ENCODE measurements at regions of chr15 and their contacts with region 1.

Region 1: GRCh38 chr15:45457641-45458433 is 64.7 kb downstream of the SLC30A4 start:
- DNase-seq: peak; percentile 79
- ATAC-seq: peak; percentile 63
- H3K4me3 ChIP-seq: peak overlapping the region; percentile 42 to 48
- H3K27ac ChIP-seq: no peak overlapping the region
- H3K4me1 ChIP-seq: peaks cover 28 to 50% of the 10 kb centered on the region in 2 experiments
- H3K27me3 ChIP-seq: no peaks in the 10 kb centered on the region
- CTCF ChIP-seq: peak; percentile 61 to 97 (median 64)
- POLR2A ChIP-seq: no peak
- RAD21 ChIP-seq: peak; percentile 93

Region 2: GRCh38 chr15:45118131-45118588 is 339.7 kb before region 1 on chr15:
- CTCF ChIA-PET with region 1: interaction called, 13 read pairs
- POLR2A ChIA-PET with region 1: no interaction called
- RAD21 ChIA-PET with region 1: no interaction called
- intact Hi-C with region 1: no loop called
- DNase-seq: peak; percentile 75
- ATAC-seq: peak; percentile 99
- H3K4me3 ChIP-seq: no peak overlapping the region
- H3K27ac ChIP-seq: no peak overlapping the region
- H3K4me1 ChIP-seq: peaks cover 2 to 16% of the 10 kb centered on the region in 2 experiments; a peak in 3 of 4 replicates
- H3K27me3 ChIP-seq: no peaks in the 10 kb centered on the region
- CTCF ChIP-seq: peak; percentile 99 to 100 (median 99)
- POLR2A ChIP-seq: no peak
- RAD21 ChIP-seq: peak; percentile 79

Region 3: DNA sequence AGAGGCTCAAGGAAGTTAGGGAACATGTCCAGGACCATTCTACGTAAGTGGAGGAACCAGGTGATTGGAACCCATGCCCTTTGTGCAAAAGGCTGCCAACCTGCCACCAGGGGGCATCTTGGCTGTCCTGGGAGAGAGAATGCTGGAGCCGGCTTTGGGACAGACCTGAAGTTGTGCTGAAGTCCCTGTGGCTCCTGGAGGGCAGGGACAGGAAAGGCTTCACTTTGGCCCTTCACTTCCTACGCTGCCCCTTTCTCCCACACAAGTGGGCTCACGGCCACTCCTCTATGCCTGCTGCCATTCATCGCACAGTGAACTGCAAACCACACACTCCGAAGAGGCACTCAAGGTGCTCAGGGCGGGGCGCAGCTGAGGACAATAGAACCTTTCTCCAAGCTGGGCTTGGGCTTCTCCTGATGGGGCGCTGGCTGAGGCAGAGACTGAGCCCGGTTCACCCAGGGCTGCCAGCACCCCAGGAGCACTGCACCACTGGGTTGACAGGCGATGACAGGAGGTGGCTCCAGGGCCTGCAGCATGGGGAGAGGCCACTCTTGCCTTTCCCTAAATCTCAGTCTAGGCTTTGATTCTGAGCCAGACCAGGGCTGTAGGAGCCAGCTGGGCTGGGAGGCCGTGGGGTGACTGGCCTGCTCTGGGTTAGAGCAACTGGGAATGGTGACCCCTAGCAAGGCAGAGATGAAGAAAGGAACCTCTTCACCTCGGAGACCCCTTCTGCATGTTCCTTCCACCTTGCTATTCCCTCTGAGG is 278.4 kb before region 1 on chr15:
- CTCF ChIA-PET with region 1: interaction called, 13 read pairs
- POLR2A ChIA-PET with region 1: no interaction called
- RAD21 ChIA-PET with region 1: no interaction called
- intact Hi-C with region 1: no loop called
- DNase-seq: peak; percentile 60
- ATAC-seq: peak; percentile 84
- H3K4me3 ChIP-seq: no peak overlapping the region
- H3K27ac ChIP-seq: no peak overlapping the region; the same call in 1 of the 2 replicates
- H3K4me1 ChIP-seq: peaks cover 12 to 41% of the 10 kb centered on the region in 2 experiments
- H3K27me3 ChIP-seq: no peaks in the 10 kb centered on the region
- CTCF ChIP-seq: peak; percentile 67 to 91 (median 83)
- POLR2A ChIP-seq: no peak
- RAD21 ChIP-seq: peak; percentile 56

Region 4: DNA sequence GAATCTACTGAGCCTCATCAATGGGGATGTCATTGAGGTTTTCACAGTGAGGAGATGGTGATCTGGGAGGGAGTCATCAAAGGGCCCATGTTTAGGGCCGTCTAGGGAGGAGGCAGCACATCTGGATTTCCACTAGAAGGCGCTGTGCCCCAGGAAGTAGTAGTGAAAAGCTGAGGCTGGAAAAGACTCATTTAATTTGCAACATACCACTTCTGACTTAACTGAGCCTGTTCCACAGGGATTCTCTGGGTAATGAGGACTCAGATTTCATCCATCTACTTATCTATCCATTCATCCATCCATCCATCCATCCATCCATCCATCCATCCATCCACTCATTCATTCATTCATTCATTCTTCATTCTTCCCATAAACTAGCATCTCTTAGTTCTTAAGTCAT is 252.6 kb before region 1 on chr15:
- CTCF ChIA-PET with region 1: interaction called, 16 read pairs
- POLR2A ChIA-PET with region 1: no interaction called
- RAD21 ChIA-PET with region 1: no interaction called
- intact Hi-C with region 1: loop called (anchors 2 kb)
- DNase-seq: peak; percentile 58
- ATAC-seq: peak; percentile 49
- H3K4me3 ChIP-seq: no peak overlapping the region
- H3K27ac ChIP-seq: no peak overlapping the region
- H3K4me1 ChIP-seq: peaks cover 0 to 14% of the 10 kb centered on the region in 2 experiments; a peak in 2 of 4 replicates
- H3K27me3 ChIP-seq: no peaks in the 10 kb centered on the region
- CTCF ChIP-seq: peak in 2 of 3 experiments; percentile 96 to 97; a peak in 4 of 6 replicates
- POLR2A ChIP-seq: no peak
- RAD21 ChIP-seq: no peak

Region 5: DNA sequence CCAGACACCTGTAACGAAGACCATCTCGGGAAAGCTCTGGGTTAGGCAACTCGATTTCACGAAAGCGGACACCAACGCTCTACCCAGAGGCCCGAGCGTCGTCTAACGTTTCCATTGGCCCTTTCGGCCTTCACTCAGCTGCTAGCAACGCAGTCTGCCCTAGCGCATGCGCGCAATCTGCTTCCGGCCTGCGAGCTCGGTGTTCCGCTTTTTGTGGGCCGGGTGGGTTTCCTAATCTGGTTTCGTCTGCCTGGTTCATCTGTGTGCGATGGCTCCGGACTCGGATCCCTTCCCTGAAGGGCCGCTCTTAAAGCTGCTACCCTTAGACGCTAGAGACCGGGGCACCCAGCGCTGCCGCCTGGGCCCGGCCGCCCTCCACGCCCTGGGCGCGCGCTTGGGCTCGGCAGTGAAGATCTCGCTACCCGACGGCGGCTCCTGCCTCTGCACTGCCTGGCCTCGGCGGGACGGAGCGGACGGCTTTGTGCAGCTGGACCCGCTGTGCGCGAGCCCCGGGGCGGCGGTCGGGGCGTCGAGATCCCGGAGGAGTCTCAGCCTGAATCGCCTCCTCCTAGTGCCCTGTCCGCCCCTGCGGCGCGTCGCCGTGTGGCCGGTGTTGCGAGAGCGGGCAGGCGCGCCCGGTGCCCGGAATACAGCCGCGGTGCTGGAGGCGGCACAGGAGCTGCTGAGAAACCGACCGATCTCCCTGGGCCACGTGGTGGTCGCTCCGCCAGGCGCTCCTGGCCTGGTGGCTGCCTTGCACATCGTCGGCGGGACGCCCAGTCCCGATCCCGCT is 55.5 kb before region 1 on chr15:
- CTCF ChIA-PET with region 1: interaction called, 6 read pairs
- POLR2A ChIA-PET with region 1: no interaction called
- RAD21 ChIA-PET with region 1: no interaction called
- intact Hi-C with region 1: loop called (anchors 2 kb)
- DNase-seq: peak; percentile 99
- ATAC-seq: peak; percentile 92
- H3K4me3 ChIP-seq: peak overlapping the region; percentile 78 to 86
- H3K27ac ChIP-seq: peak overlapping the region; percentile 97
- H3K4me1 ChIP-seq: peaks cover 5 to 15% of the 10 kb centered on the region in 2 experiments; a peak in 3 of 4 replicates
- H3K27me3 ChIP-seq: no peaks in the 10 kb centered on the region
- CTCF ChIP-seq: no peak
- POLR2A ChIP-seq: peak; percentile 97
- RAD21 ChIP-seq: no peak

Region 6: DNA sequence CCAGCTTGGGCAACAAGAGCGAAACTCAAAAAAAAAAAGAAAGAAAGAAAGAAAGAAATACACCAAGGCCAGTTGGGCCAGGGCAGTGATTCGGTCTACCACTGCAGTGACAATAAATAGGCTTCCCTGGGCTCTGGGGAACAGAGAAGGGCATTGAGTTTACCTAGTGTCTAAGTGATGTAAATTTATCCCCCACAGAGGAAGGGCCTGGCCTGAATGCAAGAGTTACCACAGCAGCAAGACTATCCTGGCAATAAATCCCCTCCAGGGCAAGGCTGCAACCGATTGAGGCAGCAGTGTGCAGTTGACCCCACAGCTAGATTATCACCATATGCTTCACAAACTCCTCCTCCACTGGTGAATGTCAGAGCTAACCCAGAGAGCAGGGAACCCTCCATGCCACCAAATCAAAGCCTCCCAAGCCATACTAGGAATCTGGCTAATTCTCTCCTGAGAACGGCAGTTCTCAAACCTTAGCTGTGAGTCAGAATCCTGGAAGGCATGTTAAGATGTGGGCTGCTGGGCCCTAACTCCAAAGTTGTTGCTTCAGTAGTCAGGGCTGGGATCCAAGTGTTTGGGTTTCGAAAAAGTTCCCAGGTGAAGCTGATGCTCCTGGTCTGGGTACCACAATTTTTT is 15.2 kb before region 1 on chr15:
- CTCF ChIA-PET with region 1: interaction called, 13 read pairs
- POLR2A ChIA-PET with region 1: no interaction called
- RAD21 ChIA-PET with region 1: no interaction called
- intact Hi-C with region 1: no loop called
- DNase-seq: no peak
- ATAC-seq: no peak
- H3K4me3 ChIP-seq: no peak overlapping the region
- H3K27ac ChIP-seq: no peak overlapping the region
- H3K4me1 ChIP-seq: peaks cover 0 to 6% of the 10 kb centered on the region in 2 experiments; a peak in 1 of 4 replicates
- H3K27me3 ChIP-seq: no peaks in the 10 kb centered on the region
- CTCF ChIP-seq: no peak
- POLR2A ChIP-seq: no peak
- RAD21 ChIP-seq: no peak

Region 7: GRCh38 chr15:45476410-45476809 is 18.6 kb after region 1 on chr15:
- CTCF ChIA-PET with region 1: no interaction called
- POLR2A ChIA-PET with region 1: no interaction called
- RAD21 ChIA-PET with region 1: no interaction called
- intact Hi-C with region 1: no loop called
- DNase-seq: no peak
- ATAC-seq: no peak
- H3K4me3 ChIP-seq: no peak overlapping the region
- H3K27ac ChIP-seq: no peak overlapping the region
- H3K4me1 ChIP-seq: no peaks in the 10 kb centered on the region
- H3K27me3 ChIP-seq: no peaks in the 10 kb centered on the region
- CTCF ChIP-seq: no peak
- POLR2A ChIP-seq: no peak
- RAD21 ChIP-seq: no peak

Region 8: DNA sequence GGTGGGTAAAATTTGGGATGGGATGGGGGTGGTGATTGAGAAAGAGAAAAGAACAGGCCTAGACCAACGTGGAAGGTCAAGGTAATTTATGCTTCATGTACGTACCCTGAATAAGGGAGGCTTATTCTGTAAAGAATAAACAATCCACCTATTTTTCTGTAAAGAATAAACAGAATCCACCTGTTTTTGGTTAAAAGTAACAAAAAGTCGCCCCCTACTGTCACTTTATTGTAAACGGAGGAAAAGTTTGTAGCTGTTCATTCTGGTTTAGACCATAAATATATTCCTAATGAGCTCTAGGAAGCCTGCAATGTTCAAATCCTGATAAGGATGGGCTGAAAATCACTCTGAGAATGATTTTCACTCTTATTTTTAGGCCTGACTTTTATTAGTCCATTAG is 153.5 kb after region 1 on chr15:
- CTCF ChIA-PET with region 1: interaction called, 82 read pairs
- POLR2A ChIA-PET with region 1: interaction called, 3 read pairs
- RAD21 ChIA-PET with region 1: interaction called in 1 of 2 experiments, 7 read pairs
- intact Hi-C with region 1: loop called (anchors 1 kb)
- DNase-seq: no peak
- ATAC-seq: no peak
- H3K4me3 ChIP-seq: no peak overlapping the region
- H3K27ac ChIP-seq: no peak overlapping the region
- H3K4me1 ChIP-seq: peaks cover 0 to 5% of the 10 kb centered on the region in 2 experiments; a peak in 1 of 4 replicates
- H3K27me3 ChIP-seq: no peaks in the 10 kb centered on the region
- CTCF ChIP-seq: peak; percentile 37 to 67 (median 60); a peak in 4 of 6 replicates
- POLR2A ChIP-seq: no peak
- RAD21 ChIP-seq: peak; percentile 57

Measured in HCT116 (cell line).